Mucosa of descending colon (tissue), 3 donors: ENCODE measurements at regions of chr14 and their contacts with region 1.

Region 1: GRCh38 chr14:52124791-52125661 is 56.2 kb upstream of the NID2 start:
- DNase-seq: no peak
- ATAC-seq: peak; percentile 59
- H3K4me3 ChIP-seq: no peak overlapping the region
- H3K4me1 ChIP-seq: no peaks in the 10 kb centered on the region
- CTCF ChIP-seq: no peak

Region 2: GRCh38 chr14:52003324-52003723 is 121.7 kb before region 1 on chr14:
- intact Hi-C with region 1: loop called (anchors 5 kb)
- DNase-seq: no peak
- ATAC-seq: peak; percentile 88
- H3K4me3 ChIP-seq: no peak overlapping the region
- H3K4me1 ChIP-seq: peaks cover 11% of the 10 kb centered on the region
- CTCF ChIP-seq: no peak